ENCODE measurements at regions of chr11 and their contacts with region 1.

Region 1: DNA sequence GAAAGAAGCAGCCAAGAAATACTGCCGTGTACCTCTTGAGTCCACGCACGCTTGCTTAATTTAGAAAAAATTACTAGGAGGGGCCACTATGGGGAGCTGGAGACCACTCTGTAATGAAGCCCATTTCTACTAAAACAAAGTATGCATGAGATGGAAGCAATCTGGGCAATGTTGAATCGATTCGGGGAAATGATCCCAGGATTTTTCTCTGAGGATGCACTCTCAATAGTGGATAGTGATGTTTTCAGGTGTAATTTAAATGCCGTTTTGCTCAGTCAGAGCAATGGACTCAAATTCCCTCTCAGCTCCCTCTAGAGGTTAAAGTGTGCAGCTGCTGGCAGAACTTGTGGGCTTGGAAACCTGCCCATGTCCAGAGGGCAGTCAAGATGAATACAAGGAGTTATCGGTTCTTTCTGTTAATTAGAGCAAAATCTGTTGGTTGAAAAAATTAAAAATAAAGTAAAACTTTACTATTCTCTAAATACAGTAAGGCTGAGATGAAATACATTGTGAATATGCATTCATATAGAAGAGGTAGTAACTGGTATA is 64.1 kb downstream of the ME3 start:
- DNase-seq: peak; percentile 78
- H3K4me3 ChIP-seq: no peak overlapping the region
- H3K27ac ChIP-seq: no peak overlapping the region
- H3K4me1 ChIP-seq: no peaks in the 10 kb centered on the region
- H3K27me3 ChIP-seq: no peaks in the 10 kb centered on the region
- CTCF ChIP-seq: peak; percentile 76

Region 2: GRCh38 chr11:86456052-86456939 is 152.0 kb before region 1 on chr11:
- intact Hi-C with region 1: loop called (anchors 5 kb)
- DNase-seq: peak; percentile 89
- H3K4me3 ChIP-seq: no peak overlapping the region
- H3K27ac ChIP-seq: no peak overlapping the region
- H3K4me1 ChIP-seq: no peaks in the 10 kb centered on the region
- H3K27me3 ChIP-seq: no peaks in the 10 kb centered on the region
- CTCF ChIP-seq: peak; percentile 89

Region 3: DNA sequence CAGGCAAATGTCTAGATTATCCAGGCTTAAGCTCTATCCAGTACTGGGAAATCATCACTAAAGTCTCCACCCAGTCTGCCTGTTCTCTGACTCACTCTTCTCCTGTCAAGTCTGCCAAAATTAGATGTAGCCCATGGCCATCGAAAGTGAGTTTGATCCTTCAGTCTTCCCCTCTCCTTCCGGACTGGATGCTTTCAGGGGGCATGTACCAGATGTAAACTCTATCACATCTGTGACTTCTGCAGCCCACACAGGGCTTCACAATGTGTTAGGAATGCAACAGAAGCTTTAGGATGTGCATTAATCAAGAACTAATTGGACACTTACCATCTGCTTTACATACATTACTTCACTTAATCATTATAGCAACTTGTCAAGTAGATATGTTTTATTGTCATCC is 51.8 kb after region 1 on chr11:
- intact Hi-C with region 1: loop called (anchors 10 kb)
- DNase-seq: no peak
- H3K4me3 ChIP-seq: no peak overlapping the region
- H3K27ac ChIP-seq: no peak overlapping the region
- H3K4me1 ChIP-seq: no peaks in the 10 kb centered on the region
- H3K27me3 ChIP-seq: no peaks in the 10 kb centered on the region
- CTCF ChIP-seq: no peak

Region 4: GRCh38 chr11:86802601-86803051 is 194.3 kb after region 1 on chr11:
- intact Hi-C with region 1: loop called (anchors 5 kb)
- DNase-seq: no peak
- H3K4me3 ChIP-seq: no peak overlapping the region
- H3K27ac ChIP-seq: no peak overlapping the region
- H3K4me1 ChIP-seq: no peaks in the 10 kb centered on the region
- H3K27me3 ChIP-seq: no peaks in the 10 kb centered on the region
- CTCF ChIP-seq: peak; percentile 45

Region 5: GRCh38 chr11:86818466-86819192 is 210.3 kb after region 1 on chr11:
- intact Hi-C with region 1: loop called (anchors 5 kb)
- DNase-seq: no peak
- H3K4me3 ChIP-seq: no peak overlapping the region
- H3K27ac ChIP-seq: no peak overlapping the region
- H3K4me1 ChIP-seq: no peaks in the 10 kb centered on the region
- H3K27me3 ChIP-seq: no peaks in the 10 kb centered on the region
- CTCF ChIP-seq: peak; percentile 66